Stomach (tissue), 19 donors: ENCODE measurements at regions of chr16 and their contacts with region 1.

Region 1: DNA sequence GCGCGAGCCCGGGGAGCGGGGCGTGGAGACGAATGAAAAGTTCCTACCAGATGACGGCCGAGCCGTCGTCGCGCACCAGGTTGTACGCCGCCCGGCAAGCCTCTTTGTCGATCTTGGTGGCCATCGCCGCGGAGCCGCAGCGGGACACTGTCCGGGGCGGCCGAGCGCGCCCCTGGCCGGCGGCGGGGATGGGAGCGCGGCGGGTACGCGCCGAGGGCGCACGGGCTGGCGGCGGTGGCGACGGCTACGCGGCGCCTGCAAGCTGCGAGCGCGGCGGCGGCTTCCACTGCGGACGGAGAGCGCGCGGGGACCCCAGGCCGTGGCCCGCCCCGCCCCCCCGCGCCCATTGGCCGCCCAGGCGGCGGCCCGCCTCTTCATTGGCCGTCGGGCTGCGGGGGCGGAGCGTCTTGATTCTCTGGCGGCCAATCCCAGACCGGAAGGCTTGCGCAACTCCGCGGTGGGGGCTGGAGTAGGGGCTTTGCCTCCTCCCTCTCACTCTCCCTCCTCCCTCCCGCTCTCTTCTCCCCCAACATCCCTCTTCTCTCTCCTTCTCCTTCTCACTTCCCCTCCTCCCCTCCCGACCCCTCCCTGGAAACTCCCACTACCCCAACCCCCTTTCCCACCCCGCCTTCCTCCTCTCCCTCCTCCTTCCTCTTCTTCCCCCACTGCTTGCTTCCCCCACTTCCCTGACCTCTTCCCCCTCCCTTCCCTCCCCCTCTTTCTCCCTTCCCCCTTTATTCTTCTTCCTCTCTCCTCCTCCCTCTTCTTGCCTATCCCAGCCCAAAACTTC is at the start of gene COTL1:
- DNase-seq: peak; percentile 98 to 99
- H3K4me3 ChIP-seq: peak within 1 kb of the TSS; percentile 88 to 92 (median 89)
- H3K27ac ChIP-seq: peak within 1 kb of the TSS; percentile 84 to 90 (median 88)
- H3K4me1 ChIP-seq: peaks cover 40 to 70% (median 51%) of the 10 kb centered on the region in 4 donors
- H3K27me3 ChIP-seq: no peaks in the 10 kb centered on the region
- CTCF ChIP-seq: no peak
- EP300 ChIP-seq: no peak
- POLR2A ChIP-seq: no peak
- total RNA-seq, gene COTL1: 40.3 to 184 (median 173) TPM

Region 2: DNA sequence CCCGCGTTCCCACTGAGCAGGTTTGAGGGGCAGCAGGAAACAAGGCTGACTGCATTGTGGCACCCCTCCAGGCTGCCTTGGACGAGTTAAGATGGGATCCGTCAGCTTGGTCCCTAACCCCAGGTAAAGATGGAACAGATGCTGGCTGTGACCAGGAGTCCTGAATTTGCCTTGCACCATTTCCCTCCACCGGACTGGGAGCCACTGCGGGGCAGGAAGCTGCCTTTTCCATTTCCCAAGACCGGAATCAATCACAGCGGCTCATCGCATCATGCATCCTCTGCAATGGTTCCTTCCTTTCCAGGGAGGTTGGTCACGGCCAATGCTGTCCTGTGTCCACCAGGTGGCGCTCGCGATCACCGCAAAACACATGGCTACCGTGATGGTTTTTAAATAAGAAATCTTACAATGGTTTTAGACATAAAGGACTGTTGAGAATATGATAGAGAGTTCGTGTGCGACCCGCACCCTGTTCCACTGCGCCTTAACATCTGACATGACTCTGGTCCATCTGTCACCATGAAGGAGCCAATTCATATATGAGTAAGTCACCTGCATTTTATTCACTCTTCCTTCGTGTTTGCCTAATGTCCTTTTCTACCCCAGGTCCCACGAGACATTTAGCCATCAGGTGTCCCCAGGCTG is 106.7 kb before region 1 on chr16:
- intact Hi-C with region 1: loop called (anchors 2 kb)
- DNase-seq: peak; percentile 90 to 94
- H3K4me3 ChIP-seq: no peak overlapping the region
- H3K27ac ChIP-seq: no peak overlapping the region
- H3K4me1 ChIP-seq: peaks cover 0 to 34% (median 13%) of the 10 kb centered on the region in 4 donors
- H3K27me3 ChIP-seq: no peaks in the 10 kb centered on the region
- CTCF ChIP-seq: peak in 6 of 7 experiments; percentile 62 to 97 (median 96)
- EP300 ChIP-seq: no peak
- POLR2A ChIP-seq: no peak